Gastrocnemius medialis (tissue), 4 donors: ENCODE measurements at regions of chr1 and their contacts with region 1.

Region 1: GRCh38 chr1:100037927-100038659 is 68.3 kb downstream of the SLC35A3 start:
- DNase-seq: peak; percentile 81 to 85
- ATAC-seq: peak; percentile 91 to 93
- H3K4me3 ChIP-seq: peak overlapping the region; percentile 86 to 90 (median 88)
- H3K27ac ChIP-seq: peak overlapping the region; percentile 93 to 96 (median 96)
- H3K4me1 ChIP-seq: peaks cover 24 to 33% of the 10 kb centered on the region in 2 donors
- H3K27me3 ChIP-seq: no peaks in the 10 kb centered on the region
- CTCF ChIP-seq: no peak
- POLR2A ChIP-seq: peak; percentile 94 to 95

Region 2: DNA sequence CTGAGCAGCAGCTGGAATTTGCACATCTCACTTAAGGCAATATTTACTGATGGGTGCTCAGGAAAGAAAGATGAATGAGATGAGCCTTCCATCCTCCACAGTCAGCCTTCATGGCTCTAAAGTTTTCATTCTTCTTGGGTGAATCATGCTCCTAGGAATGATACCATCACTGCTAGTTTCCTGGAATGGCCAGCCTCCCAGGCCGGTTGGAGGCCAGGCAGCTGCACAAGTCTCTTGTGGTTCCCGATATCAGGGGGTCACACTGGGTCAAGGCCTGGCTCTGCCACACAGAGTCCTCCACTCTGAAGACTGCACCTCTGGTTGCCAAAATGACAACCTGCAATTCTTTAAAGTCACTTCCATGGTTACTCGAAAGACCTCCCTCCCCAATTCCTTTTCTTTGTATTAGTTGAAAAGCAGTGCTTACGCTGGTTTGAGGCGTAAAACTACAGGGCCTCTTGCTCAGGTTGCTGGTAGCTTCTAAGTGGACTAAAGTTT is 438.4 kb before region 1 on chr1:
- in situ Hi-C with region 1: no loop called
- intact Hi-C with region 1: no loop called
- DNase-seq: no peak
- ATAC-seq: no peak
- H3K4me3 ChIP-seq: no peak overlapping the region
- H3K27ac ChIP-seq: peak overlapping the region; percentile 17 to 65 (median 34)
- H3K4me1 ChIP-seq: peaks cover 0 to 16% of the 10 kb centered on the region in 2 donors
- H3K27me3 ChIP-seq: no peaks in the 10 kb centered on the region
- CTCF ChIP-seq: no peak
- POLR2A ChIP-seq: no peak

Region 3: DNA sequence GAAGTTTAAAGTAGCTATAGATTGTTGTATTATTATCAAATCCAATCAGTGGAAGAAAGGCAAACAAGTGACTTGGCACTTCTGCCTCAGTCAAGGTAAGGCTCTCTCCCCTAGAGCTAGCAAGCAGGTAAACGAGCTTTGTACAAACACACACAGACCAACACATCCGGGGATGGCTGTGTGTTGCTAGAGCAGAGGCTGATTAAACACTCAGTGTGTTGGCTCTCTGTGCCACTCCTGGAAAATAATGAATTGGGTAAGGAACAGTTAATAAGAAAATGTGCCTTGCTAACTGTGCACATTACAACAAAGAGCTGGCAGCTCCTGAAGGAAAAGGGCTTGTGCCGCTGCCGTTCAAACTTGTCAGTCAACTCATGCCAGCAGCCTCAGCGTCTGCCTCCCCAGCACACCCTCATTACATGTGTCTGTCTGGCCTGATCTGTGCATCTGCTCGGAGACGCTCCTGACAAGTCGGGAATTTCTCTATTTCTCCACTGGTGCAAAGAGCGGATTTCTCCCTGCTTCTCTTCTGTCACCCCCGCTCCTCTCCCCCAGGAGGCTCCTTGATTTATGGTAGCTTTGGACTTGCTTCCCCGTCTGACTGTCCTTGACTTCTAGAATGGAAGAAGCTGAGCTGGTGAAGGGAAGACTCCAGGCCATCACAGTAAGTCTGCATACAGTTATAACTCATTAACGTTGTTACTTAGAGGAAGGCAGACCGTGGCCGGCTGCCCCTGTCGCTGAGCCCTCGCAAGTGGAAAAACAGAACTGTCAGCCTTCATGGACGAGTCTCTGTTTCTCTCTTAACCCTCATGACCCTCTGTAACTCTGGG is 392.2 kb before region 1 on chr1 and contains the start of gene PALMD:
- in situ Hi-C with region 1: no loop called
- intact Hi-C with region 1: loop called (anchors 5 kb)
- DNase-seq: peak; percentile 75 to 84
- ATAC-seq: peak; percentile 73 to 79
- H3K4me3 ChIP-seq: peak within 1 kb of the TSS; percentile 63 to 76 (median 70)
- H3K27ac ChIP-seq: peak within 1 kb of the TSS; percentile 88 to 97 (median 90)
- H3K4me1 ChIP-seq: peaks cover 40 to 44% of the 10 kb centered on the region in 2 donors
- H3K27me3 ChIP-seq: no peaks in the 10 kb centered on the region
- CTCF ChIP-seq: no peak
- POLR2A ChIP-seq: peak; percentile 57 to 66
- total RNA-seq, gene PALMD: 60.7 to 254 (median 79.1) TPM

Region 4: GRCh38 chr1:99969729-99970621 is 68.1 kb before region 1 on chr1 and contains the start of gene SLC35A3:
- in situ Hi-C with region 1: no loop called
- intact Hi-C with region 1: loop called (anchors 1 kb)
- DNase-seq: peak; percentile 51 to 72
- ATAC-seq: peak; percentile 85 to 92
- H3K4me3 ChIP-seq: peak within 1 kb of the TSS; percentile 84 to 95 (median 86)
- H3K27ac ChIP-seq: peak within 1 kb of the TSS; percentile 58 to 76 (median 72)
- H3K4me1 ChIP-seq: peaks cover 6 to 8% of the 10 kb centered on the region in 2 donors
- H3K27me3 ChIP-seq: no peaks in the 10 kb centered on the region
- CTCF ChIP-seq: no peak
- POLR2A ChIP-seq: peak in 1 of 2 donors; percentile 10
- total RNA-seq, gene SLC35A3: 4.6 to 10.3 (median 8.2) TPM

Region 5: GRCh38 chr1:100132566-100133477 is 94.7 kb after region 1 on chr1 and contains the starts of genes SASS6 and TRMT13:
- in situ Hi-C with region 1: no loop called
- intact Hi-C with region 1: loop called (anchors 2 kb)
- DNase-seq: peak; percentile 96
- ATAC-seq: peak; percentile 99
- H3K4me3 ChIP-seq: peak within 1 kb of the TSS; percentile 80 to 90 (median 85)
- H3K27ac ChIP-seq: peak within 1 kb of the TSS; percentile 75 to 85 (median 82)
- H3K4me1 ChIP-seq: peaks cover 20 to 28% of the 10 kb centered on the region in 2 donors
- H3K27me3 ChIP-seq: no peaks in the 10 kb centered on the region
- CTCF ChIP-seq: peak in 3 of 5 experiments; percentile 9 to 28 (median 23)
- POLR2A ChIP-seq: peak; percentile 7 to 20
- total RNA-seq, gene SASS6: 0.71 to 4.2 (median 1.6) TPM
- total RNA-seq, gene TRMT13: 5.5 to 22.6 (median 10.6) TPM

Region 6: GRCh38 chr1:100249537-100250257 is 211.6 kb after region 1 on chr1 and contains the start of gene DBT:
- in situ Hi-C with region 1: no loop called
- intact Hi-C with region 1: loop called (anchors 5 kb)
- DNase-seq: peak; percentile 96 to 97
- ATAC-seq: peak; percentile 100
- H3K4me3 ChIP-seq: peak within 1 kb of the TSS; percentile 79 to 96 (median 88)
- H3K27ac ChIP-seq: peak within 1 kb of the TSS; percentile 88 to 95 (median 90)
- H3K4me1 ChIP-seq: peaks cover 8 to 11% of the 10 kb centered on the region in 2 donors
- H3K27me3 ChIP-seq: no peaks in the 10 kb centered on the region
- CTCF ChIP-seq: no peak
- POLR2A ChIP-seq: peak; percentile 74 to 84
- total RNA-seq, gene DBT: 7.6 to 11.3 (median 9.6) TPM

Region 7: DNA sequence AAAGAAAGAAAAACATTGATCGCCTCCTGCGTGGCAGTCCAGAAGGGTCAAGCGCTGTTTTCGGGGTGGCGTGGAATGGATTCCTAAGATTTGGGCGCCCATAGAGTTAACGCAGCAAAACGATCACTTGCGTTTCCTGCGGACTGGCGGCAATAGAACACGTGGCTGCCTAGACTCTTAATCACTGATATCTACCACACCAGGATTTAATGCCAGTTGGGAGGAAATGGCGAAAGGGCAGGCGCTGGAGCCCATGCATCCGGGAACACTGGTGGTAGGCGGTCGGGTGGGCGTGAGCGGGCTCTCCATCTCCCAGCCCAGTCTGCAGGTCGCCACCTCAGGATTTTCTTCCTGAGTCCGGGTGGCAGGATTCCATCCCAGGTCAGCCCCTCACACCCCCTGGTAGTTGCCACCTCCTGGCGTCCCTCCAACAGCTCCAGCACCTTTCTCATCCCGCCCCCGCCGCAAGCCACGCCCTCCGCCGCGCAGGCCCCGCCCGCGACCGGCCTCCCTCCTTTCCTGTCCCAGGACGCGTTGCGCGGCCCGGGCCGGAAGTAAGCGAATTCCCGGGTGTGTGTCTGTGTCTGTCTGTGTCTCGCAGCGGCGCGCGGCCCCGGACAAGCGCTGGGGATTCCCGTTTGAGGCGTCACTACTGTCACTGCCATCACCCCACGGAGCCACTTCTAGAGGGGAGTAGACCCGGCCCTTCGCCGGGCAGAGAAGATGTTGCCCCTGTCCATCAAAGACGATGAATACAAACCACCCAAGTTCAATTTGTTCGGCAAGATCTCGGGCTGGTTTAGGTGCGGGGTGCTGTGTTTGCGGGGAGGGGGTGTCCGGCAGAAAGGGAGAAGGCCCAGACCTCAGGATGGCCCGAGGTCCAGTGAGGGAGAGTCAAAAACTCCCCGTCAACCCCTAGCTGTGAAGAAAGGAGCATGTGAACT is 857.7 kb after region 1 on chr1 and contains the start of gene SLC30A7:
- in situ Hi-C with region 1: no loop called
- intact Hi-C with region 1: loop called (anchors 5 kb)
- DNase-seq: peak; percentile 87 to 92
- ATAC-seq: peak; percentile 80 to 86
- H3K4me3 ChIP-seq: peak within 1 kb of the TSS; percentile 66 to 99 (median 86)
- H3K27ac ChIP-seq: peak within 1 kb of the TSS; percentile 94 to 99 (median 94)
- H3K4me1 ChIP-seq: peaks cover 21 to 29% of the 10 kb centered on the region in 2 donors
- H3K27me3 ChIP-seq: no peaks in the 10 kb centered on the region
- CTCF ChIP-seq: no peak
- POLR2A ChIP-seq: peak; percentile 60 to 79
- total RNA-seq, gene SLC30A7: 1.5 to 6.2 (median 3.5) TPM